ENCODE measurements at regions of chr15 and their contacts with region 1.

Region 1: GRCh38 chr15:82046666-82047452 is 1.0 kb upstream of the MEX3B start:
- DNase-seq: peak; percentile 92 to 96 (median 93)
- ATAC-seq: peak; percentile 46 to 89 (median 80)
- H3K4me3 ChIP-seq: peak overlapping the region; percentile 65 to 97 (median 87)
- H3K27ac ChIP-seq: peak overlapping the region; percentile 90 to 100 (median 97)
- H3K4me1 ChIP-seq: peaks cover 0 to 33% (median 19%) of the 10 kb centered on the region in 12 donors
- H3K27me3 ChIP-seq: no peaks in the 10 kb centered on the region
- CTCF ChIP-seq: peak; percentile 49 to 89 (median 76)
- POLR2A ChIP-seq: peak in 1 of 2 donors; percentile 66

Region 2: DNA sequence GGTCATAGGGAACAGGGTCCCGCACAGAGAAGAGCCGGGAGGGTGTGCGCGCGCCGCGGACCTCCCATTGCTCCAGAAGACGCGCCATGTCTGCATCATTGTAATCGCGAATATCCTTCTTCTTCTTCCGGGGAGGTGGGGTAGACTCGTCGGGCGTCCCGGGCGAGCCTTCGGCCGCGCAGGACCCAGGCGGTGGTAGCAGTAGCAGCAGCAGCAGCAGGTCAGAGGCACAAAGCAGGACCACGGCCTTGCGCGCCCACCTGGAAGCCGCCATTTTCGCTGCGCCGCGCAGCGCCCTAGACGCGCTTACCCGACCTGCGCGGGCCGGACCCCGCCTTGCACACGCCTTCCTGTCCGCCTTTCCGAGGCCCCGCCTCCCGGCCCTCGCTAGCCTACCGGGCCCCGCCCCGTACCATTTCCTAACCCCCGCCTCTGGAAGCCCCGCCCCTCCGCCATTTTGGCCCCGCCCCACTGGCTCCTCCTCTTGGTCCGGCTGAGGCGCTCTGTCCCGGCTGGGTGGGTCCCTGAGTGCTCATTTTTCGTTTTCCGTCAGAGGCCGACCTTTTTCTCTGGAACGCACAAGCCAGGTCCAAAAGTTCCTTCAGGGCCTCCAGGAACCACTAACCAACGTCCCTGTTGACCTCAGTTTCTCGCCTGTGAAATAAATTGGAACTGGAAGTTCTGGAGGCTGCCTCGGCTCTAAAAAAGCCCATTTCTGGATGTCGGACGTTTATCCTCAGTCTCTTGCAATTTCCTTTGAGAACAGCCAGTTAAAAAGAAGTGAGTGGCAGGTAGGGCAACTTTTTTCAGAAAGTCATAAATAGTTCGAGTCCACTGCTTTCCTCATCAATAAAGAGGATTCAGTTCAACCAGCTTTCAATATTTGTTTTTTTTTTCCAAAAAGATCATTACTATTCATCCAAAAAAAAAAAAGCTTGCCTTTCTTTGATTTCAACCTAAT is 1057.1 kb before region 1 on chr15 and contains the start of gene MESD:
- intact Hi-C with region 1: loop called in 1 of 10 experiments (anchors 10 kb)
- DNase-seq: peak; percentile 98 to 99 (median 99)
- ATAC-seq: peak; percentile 97 to 99 (median 98)
- H3K4me3 ChIP-seq: peak within 1 kb of the TSS; percentile 75 to 97 (median 88)
- H3K27ac ChIP-seq: peak within 1 kb of the TSS; percentile 80 to 96 (median 92)
- H3K4me1 ChIP-seq: peaks cover 10 to 67% (median 55%) of the 10 kb centered on the region in 12 donors
- H3K27me3 ChIP-seq: no peaks in the 10 kb centered on the region
- CTCF ChIP-seq: no peak
- POLR2A ChIP-seq: peak; percentile 36 to 94
- total RNA-seq, gene MESD: 11.2 to 19.8 (median 14.8) TPM

Region 3: GRCh38 chr15:81400640-81401236 is 646.1 kb before region 1 on chr15:
- intact Hi-C with region 1: loop called in 1 of 10 experiments (anchors 10 kb)
- DNase-seq: no peak
- ATAC-seq: no peak
- H3K4me3 ChIP-seq: no peak overlapping the region
- H3K27ac ChIP-seq: no peak overlapping the region
- H3K4me1 ChIP-seq: no peaks in the 10 kb centered on the region
- H3K27me3 ChIP-seq: no peaks in the 10 kb centered on the region
- CTCF ChIP-seq: peak; percentile 69 to 82 (median 73)
- POLR2A ChIP-seq: no peak

Region 4: GRCh38 chr15:81480645-81481053 is 566.2 kb before region 1 on chr15:
- intact Hi-C with region 1: loop called in 9 of 10 experiments (anchors 2 to 10 kb)
- DNase-seq: peak in 3 of 5 donors; percentile 23 to 32 (median 26)
- ATAC-seq: peak; percentile 42 to 65 (median 62)
- H3K4me3 ChIP-seq: peak overlapping the region in 1 of 12 donors; percentile 7
- H3K27ac ChIP-seq: no peak overlapping the region
- H3K4me1 ChIP-seq: no peaks in the 10 kb centered on the region
- H3K27me3 ChIP-seq: no peaks in the 10 kb centered on the region
- CTCF ChIP-seq: peak; percentile 79 to 99 (median 87)
- POLR2A ChIP-seq: no peak

Region 5: DNA sequence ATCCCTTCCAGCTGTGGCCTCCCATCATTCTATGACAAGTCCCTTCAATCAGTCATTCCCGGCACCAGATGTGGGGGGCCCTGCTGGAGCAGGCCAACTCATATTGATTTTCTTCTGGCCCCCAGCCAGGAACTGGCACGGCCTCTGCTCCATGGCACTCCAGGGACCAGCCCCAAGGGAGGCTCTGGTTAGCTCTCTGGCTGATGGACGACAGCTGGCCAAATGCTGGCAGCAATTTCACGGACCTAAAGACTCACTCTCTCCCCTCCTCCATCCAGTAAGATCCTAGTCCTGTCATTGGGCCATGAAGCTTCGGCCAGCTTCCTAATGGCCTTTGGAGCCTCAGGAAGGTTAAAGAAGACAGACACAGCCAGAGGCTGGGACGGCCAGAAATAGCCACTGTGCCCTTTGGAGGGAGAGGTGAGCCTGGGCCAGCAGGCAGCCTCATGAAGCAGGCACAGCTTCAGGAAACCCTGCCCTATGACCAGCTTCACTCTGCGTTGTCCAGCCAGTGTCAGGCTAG is 132.1 kb before region 1 on chr15:
- intact Hi-C with region 1: loop called in 4 of 10 experiments (anchors 5 to 10 kb)
- DNase-seq: peak; percentile 40 to 88 (median 69)
- ATAC-seq: peak; percentile 87 to 96 (median 92)
- H3K4me3 ChIP-seq: no peak overlapping the region
- H3K27ac ChIP-seq: peak overlapping the region; percentile 11 to 82 (median 76)
- H3K4me1 ChIP-seq: peaks cover 0 to 39% (median 15%) of the 10 kb centered on the region in 12 donors
- H3K27me3 ChIP-seq: no peaks in the 10 kb centered on the region
- CTCF ChIP-seq: no peak
- POLR2A ChIP-seq: no peak

Region 6: GRCh38 chr15:82139823-82140268 is 93.0 kb after region 1 on chr15:
- intact Hi-C with region 1: loop called in 2 of 10 experiments (anchors 5 kb)
- DNase-seq: no peak
- ATAC-seq: no peak
- H3K4me3 ChIP-seq: no peak overlapping the region
- H3K27ac ChIP-seq: no peak overlapping the region
- H3K4me1 ChIP-seq: peaks cover 0 to 11% (median 0%) of the 10 kb centered on the region in 12 donors
- H3K27me3 ChIP-seq: no peaks in the 10 kb centered on the region
- CTCF ChIP-seq: peak; percentile 54 to 79 (median 70)
- POLR2A ChIP-seq: no peak

Region 7: GRCh38 chr15:82530606-82531379 is 483.9 kb after region 1 on chr15:
- intact Hi-C with region 1: loop called in 1 of 10 experiments (anchors 10 kb)
- DNase-seq: peak; percentile 52 to 75 (median 64)
- ATAC-seq: peak; percentile 77 to 90 (median 85)
- H3K4me3 ChIP-seq: peak overlapping the region in 6 of 12 donors; percentile 12 to 43 (median 24)
- H3K27ac ChIP-seq: no peak overlapping the region
- H3K4me1 ChIP-seq: peaks cover 0 to 12% (median 4%) of the 10 kb centered on the region in 12 donors
- H3K27me3 ChIP-seq: no peaks in the 10 kb centered on the region
- CTCF ChIP-seq: peak; percentile 72 to 90 (median 80)
- POLR2A ChIP-seq: no peak